Sigmoid colon (tissue), 7 donors: ENCODE measurements at regions of chr4 and their contacts with region 1.

Region 1: GRCh38 chr4:123396307-123397143 is at the start of gene SPRY1:
- DNase-seq: peak; percentile 94
- H3K4me3 ChIP-seq: peak within 1 kb of the TSS; percentile 65 to 88 (median 76)
- H3K27ac ChIP-seq: peak within 1 kb of the TSS; percentile 83 to 90 (median 86)
- H3K4me1 ChIP-seq: peaks cover 0 to 5% (median 4%) of the 10 kb centered on the region in 4 donors
- H3K27me3 ChIP-seq: no peaks in the 10 kb centered on the region
- CTCF ChIP-seq: no peak
- EP300 ChIP-seq: no peak
- POLR2A ChIP-seq: peak; percentile 27 to 62
- total RNA-seq, gene SPRY1: 37.6 to 84.4 (median 56.7) TPM

Region 2: DNA sequence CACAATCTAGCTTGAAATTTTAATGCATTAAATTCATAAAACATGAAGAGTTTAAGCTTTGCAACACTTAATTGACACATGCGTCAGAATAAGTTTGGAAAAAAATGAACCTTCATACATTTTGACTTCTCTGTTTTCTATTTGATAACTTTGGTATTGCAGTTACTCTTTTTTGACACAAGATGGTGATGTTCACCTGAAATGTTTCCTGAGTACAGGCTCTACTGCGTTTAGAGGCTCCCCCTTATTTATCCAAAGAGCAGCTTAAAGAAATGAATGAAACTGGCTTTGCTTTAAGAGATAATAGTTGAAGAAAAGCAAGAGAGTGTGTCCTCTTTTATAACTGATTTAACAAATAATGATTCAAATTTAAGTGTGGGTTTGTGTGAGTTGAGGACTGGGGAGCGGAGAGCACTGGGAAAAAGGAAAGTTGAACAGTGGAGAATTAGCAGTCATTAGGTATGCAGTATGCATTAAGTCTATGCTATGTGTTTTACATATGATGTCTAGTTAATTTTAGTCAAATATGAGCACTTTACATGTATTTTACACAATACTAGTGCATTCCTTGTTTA is 293.5 kb before region 1 on chr4:
- intact Hi-C with region 1: loop called (anchors 5 kb)
- DNase-seq: no peak
- H3K4me3 ChIP-seq: no peak overlapping the region
- H3K27ac ChIP-seq: no peak overlapping the region
- H3K4me1 ChIP-seq: peaks cover 0 to 9% (median 5%) of the 10 kb centered on the region in 4 donors
- H3K27me3 ChIP-seq: no peaks in the 10 kb centered on the region
- CTCF ChIP-seq: peak; percentile 45 to 75 (median 52)
- EP300 ChIP-seq: no peak
- POLR2A ChIP-seq: no peak

Region 3: DNA sequence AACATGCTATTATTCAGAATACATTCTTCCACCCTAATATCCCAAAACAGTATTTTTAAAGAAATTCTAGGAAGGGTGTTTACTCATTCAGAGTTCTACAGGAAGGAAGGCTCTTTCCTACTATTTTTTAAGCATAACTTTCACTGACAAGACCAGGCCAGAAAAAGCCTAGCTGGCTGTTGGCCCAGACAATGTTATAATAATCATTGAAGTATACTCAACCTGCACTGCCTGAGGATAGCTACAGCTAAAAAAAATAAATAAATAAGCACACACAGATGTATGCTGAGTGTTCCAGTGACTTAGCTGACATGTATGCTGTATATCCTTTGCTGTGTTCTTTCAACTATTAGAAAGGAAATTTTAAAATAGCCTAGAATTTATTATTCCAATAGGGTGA is 145.7 kb before region 1 on chr4:
- intact Hi-C with region 1: no loop called
- DNase-seq: peak; percentile 75
- H3K4me3 ChIP-seq: no peak overlapping the region
- H3K27ac ChIP-seq: peak overlapping the region in 2 of 4 donors; percentile 36 to 62
- H3K4me1 ChIP-seq: peaks cover 0 to 36% (median 19%) of the 10 kb centered on the region in 4 donors
- H3K27me3 ChIP-seq: no peaks in the 10 kb centered on the region
- CTCF ChIP-seq: no peak
- EP300 ChIP-seq: no peak
- POLR2A ChIP-seq: no peak

Region 4: DNA sequence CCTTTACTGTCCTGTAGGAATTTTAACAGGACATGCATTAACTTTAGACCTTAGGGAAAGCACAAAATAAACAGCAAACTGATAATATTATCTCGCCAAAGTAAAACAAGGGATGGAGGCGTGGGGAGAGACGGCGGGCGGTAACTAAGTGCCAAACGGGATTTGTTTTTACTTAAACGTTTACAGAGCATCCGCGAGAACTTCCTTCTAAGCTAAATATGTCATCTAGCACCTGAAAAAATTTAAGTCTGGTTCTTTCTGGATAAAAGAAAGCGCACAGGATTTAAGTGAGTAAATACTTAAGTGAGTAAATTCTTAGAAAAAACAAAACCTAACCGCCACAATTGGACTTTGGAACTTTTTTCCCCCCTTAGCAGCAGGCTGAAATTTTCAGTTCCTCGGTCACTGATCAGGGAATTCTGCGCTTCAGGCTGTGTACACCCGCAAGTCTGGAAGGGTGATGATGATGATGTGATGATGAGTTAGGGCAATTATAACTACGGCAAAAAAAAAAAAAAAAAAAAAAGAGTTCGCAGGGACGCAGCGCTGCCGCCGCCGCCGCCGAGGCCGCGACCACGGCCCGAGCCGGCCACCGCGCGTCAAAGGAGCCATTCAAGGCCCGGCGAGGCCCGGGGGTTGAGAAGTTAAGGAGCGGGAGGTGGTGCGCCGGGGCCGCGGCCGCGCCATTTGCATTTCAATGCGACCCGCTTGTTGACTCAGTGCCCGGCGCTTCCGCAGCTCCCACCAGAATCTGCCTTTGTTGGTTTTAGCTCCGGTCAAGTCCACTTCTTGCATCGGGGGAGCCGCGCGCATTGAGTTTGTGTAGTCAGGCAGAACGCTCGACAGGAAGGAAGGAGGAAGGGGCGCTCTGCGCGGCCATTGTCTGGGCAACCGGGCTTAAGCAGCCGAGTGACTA is 108.8 kb after region 1 on chr4:
- intact Hi-C with region 1: loop called (anchors 10 kb)
- DNase-seq: peak; percentile 78
- H3K4me3 ChIP-seq: peak overlapping the region; percentile 34 to 57 (median 50)
- H3K27ac ChIP-seq: peak overlapping the region; percentile 20 to 75 (median 50)
- H3K4me1 ChIP-seq: peaks cover 0 to 12% (median 0%) of the 10 kb centered on the region in 4 donors
- H3K27me3 ChIP-seq: no peaks in the 10 kb centered on the region
- CTCF ChIP-seq: no peak
- EP300 ChIP-seq: no peak
- POLR2A ChIP-seq: no peak

Region 5: GRCh38 chr4:123649645-123650391 is 253.3 kb after region 1 on chr4:
- intact Hi-C with region 1: loop called (anchors 5 kb)
- DNase-seq: peak; percentile 75
- H3K4me3 ChIP-seq: peak overlapping the region in 1 of 4 donors; percentile 1
- H3K27ac ChIP-seq: peak overlapping the region; percentile 45 to 75 (median 70)
- H3K4me1 ChIP-seq: peaks cover 0 to 42% (median 40%) of the 10 kb centered on the region in 4 donors
- H3K27me3 ChIP-seq: no peaks in the 10 kb centered on the region
- CTCF ChIP-seq: no peak
- EP300 ChIP-seq: peak in 1 of 4 donors; percentile 59
- POLR2A ChIP-seq: no peak

Region 6: GRCh38 chr4:124262211-124263179 is 866.0 kb after region 1 on chr4:
- intact Hi-C with region 1: loop called (anchors 5 kb)
- DNase-seq: peak; percentile 79
- H3K4me3 ChIP-seq: no peak overlapping the region
- H3K27ac ChIP-seq: no peak overlapping the region
- H3K4me1 ChIP-seq: peaks cover 0 to 10% (median 7%) of the 10 kb centered on the region in 4 donors
- H3K27me3 ChIP-seq: no peaks in the 10 kb centered on the region
- CTCF ChIP-seq: peak; percentile 60 to 83 (median 62)
- EP300 ChIP-seq: no peak
- POLR2A ChIP-seq: no peak